Right ventricle myocardium superior (tissue), 1 donor: ENCODE measurements at regions of chr6 and their contacts with region 1.

Region 1: DNA sequence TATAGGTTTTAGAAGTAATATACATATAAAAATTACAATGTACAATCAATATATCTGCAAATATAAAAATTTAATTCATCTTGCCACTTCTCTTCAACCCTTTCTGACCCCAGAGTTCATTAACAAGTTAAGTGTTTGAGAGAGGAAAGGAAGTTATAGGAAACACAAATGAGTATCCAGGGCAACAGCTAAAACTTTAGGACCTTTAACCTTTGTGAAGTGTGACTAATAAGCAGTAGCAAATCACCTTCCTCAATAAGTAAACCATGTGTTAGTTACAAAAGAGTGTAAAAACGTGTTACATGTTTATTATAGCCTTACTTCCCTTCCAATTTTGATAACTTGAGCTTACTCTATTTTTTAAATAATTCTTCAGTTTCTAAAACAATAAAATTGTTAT is 73.4 kb upstream of the SIM1 start:
- DNase-seq: no peak
- ATAC-seq: no peak

Region 2: GRCh38 chr6:99852031-99852430 is 686.1 kb before region 1 on chr6:
- intact Hi-C with region 1: no loop called
- DNase-seq: no peak
- ATAC-seq: no peak

Region 3: GRCh38 chr6:100633096-100633777 is 95.2 kb after region 1 on chr6:
- intact Hi-C with region 1: loop called (anchors 5 kb)
- DNase-seq: no peak
- ATAC-seq: peak; percentile 18

Region 4: DNA sequence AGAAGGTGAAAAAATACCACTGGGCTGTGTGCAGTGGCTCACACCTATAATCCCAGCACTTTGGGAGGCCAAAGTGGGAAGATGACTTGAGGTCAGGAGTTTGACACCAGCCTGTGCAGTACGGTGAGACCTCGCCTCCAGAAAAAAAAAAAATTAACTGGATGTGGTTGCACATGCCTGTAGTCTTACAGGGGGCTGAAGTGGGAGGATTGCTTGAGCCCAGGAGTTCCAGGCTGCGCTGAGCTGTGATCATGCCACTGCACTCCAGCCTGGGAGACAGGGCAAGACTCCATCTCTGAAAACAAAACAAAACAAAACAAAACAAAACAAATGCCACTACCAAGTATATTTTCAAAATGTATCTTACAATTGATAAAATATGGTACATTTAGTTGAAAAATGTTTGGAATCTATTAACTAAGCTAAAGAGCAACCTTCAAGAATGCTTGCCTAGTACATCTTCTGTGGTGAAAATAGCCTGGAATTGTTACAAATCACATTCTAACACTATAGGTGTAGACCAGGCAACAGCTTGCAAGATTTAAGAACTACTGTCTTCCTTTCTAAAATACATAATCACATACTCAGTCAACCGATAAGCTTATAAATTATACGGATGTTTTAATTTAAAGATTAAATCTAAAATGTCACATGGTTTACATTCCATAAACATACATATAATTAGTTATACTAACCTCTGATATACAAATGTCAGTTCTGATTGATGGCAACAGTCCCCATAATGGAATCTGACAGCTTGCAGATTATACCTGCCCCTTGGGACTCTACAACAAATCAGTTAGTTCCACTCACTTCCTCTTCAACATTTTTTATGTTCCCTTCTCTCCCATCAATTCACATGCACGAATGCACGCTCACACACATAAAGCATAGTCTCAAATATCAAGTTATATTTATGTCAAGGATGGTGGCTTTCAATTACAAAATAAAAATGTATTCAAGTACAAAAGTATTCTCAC is 192.2 kb after region 1 on chr6:
- intact Hi-C with region 1: no loop called
- DNase-seq: no peak
- ATAC-seq: no peak